ENCODE measurements at regions of chr6 and their contacts with region 1.

Region 1: GRCh38 chr6:3887150-3887700 is 38.1 kb downstream of the FAM50B start:
- DNase-seq: no peak
- ATAC-seq: peak; percentile 14

Region 2: GRCh38 chr6:3742426-3743344 is 144.5 kb before region 1 on chr6:
- intact Hi-C with region 1: loop called (anchors 10 kb)
- DNase-seq: peak; percentile 88
- ATAC-seq: peak; percentile 77

Region 3: DNA sequence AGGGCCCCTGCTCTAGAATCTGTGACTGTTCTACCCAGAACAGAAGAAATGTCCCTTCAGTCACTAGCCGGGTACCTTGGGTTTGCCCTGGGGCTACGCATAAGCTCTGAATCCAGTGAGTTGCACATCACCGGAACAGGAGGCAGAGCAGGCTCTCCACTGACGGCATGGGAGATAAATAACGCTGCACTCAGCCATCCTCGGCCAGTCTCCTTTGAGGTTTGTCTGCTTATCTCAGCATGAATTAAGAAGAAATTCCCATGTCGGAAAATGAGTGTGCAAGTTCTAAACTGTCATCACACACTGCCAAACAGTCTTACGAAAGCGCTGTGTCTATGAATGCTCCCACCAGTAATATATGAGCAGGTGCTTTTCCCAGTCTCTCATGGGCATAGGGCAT is 52.7 kb after region 1 on chr6:
- intact Hi-C with region 1: loop called (anchors 10 kb)
- DNase-seq: no peak
- ATAC-seq: peak; percentile 62